MCF 10A (cell line): ENCODE measurements at regions of chr20 and their contacts with region 1.

Region 1: DNA sequence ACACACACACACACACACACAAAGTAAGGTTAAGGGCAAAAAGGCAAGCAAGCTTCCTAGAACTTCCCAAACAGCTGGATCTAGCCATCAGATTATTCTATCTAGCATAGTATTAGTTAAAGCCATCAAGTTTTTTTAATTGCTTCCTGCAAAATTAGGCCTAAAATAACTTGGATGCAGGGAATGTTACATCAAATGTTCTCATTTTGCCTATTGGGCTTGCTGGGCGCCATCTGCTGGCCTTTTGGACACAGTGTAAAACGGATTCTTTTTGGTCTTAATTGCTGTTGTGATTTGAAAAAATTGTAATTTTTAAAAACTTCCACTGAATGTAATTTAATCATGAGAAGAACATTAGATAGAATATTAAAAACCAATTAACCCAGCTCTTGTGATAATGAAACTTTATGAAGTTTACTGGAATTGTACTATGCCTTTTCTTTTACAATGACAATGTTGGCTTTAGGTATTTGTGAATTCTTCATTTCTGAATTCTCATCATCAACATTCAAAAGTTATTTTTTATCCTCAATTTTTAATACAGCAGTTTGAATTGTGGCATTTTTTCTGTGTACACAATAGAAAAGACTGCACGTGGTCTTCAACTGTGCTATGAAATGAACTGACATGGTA is 6.8 kb downstream of the MKKS start:
- DNase-seq: peak; percentile 72
- H3K4me3 Mint-ChIP-seq: no peak overlapping the region
- H3K27ac Mint-ChIP-seq: peak overlapping the region; percentile 74
- H3K4me1 Mint-ChIP-seq: peaks cover 34% of the 10 kb centered on the region
- H3K27me3 Mint-ChIP-seq: no peaks in the 10 kb centered on the region
- CTCF ChIP-seq: peak; percentile 72

Region 2: GRCh38 chr20:9966966-9967365 is 460.2 kb before region 1 on chr20:
- CTCF ChIA-PET with region 1: interaction called, 34 read pairs
- POLR2A ChIA-PET with region 1: no interaction called
- intact Hi-C with region 1: no loop called
- DNase-seq: peak; percentile 37
- H3K4me3 Mint-ChIP-seq: no peak overlapping the region
- H3K27ac Mint-ChIP-seq: no peak overlapping the region
- H3K4me1 Mint-ChIP-seq: no peaks in the 10 kb centered on the region
- H3K27me3 Mint-ChIP-seq: no peaks in the 10 kb centered on the region
- CTCF ChIP-seq: peak; percentile 41

Region 3: GRCh38 chr20:10034717-10035571 is 392.2 kb before region 1 on chr20 and contains the start of gene ANKEF1:
- CTCF ChIA-PET with region 1: interaction called, 17 read pairs
- POLR2A ChIA-PET with region 1: no interaction called
- intact Hi-C with region 1: no loop called
- DNase-seq: peak; percentile 72
- H3K4me3 Mint-ChIP-seq: peak within 1 kb of the TSS; percentile 73
- H3K27ac Mint-ChIP-seq: peak within 1 kb of the TSS; percentile 57
- H3K4me1 Mint-ChIP-seq: peaks cover 1% of the 10 kb centered on the region
- H3K27me3 Mint-ChIP-seq: no peaks in the 10 kb centered on the region
- CTCF ChIP-seq: no peak
- total RNA-seq, gene ANKEF1: 5.6 and 7.2 TPM in 2 replicates

Region 4: DNA sequence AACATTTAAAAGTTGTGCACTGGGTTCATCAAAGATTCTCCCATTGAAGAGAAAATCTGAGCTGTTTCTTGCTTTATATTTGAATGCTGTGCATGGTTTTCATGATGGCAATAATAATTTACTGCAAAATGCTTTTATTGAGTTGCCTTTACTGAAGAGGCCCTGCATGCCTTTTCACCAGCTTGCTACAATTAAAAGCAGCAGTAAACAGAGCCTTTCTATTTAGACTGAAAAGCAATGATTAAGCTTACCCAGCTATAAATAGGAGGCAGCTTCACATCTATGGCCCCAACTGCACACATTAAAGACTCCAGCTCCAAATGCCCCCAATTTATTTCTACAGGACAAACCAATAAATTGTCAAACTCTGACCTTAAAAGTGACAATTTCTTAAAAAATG is 322.1 kb before region 1 on chr20:
- CTCF ChIA-PET with region 1: interaction called, 10 read pairs
- POLR2A ChIA-PET with region 1: no interaction called
- intact Hi-C with region 1: no loop called
- DNase-seq: no peak
- H3K4me3 Mint-ChIP-seq: no peak overlapping the region
- H3K27ac Mint-ChIP-seq: no peak overlapping the region
- H3K4me1 Mint-ChIP-seq: no peaks in the 10 kb centered on the region
- H3K27me3 Mint-ChIP-seq: no peaks in the 10 kb centered on the region
- CTCF ChIP-seq: no peak

Region 5: DNA sequence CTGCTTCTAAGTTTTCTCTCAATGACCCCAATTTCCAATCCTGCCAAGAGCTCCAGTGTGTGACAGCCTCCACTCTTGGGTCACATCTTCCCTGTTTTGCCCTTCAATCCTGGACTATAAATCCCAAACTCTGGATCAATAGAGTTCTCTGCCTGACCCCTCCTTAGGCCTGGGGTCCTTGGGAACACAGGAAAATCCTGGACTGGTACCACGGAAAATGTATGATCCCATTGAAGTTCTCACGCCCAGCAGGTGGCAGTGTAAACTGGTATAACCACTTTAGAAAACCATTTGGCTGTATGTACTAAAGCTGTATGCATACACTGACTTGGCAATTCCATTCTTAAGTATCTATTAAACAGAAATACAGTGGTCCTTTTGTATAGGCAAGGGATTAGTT is 110.6 kb before region 1 on chr20:
- CTCF ChIA-PET with region 1: interaction called, 13 read pairs
- POLR2A ChIA-PET with region 1: no interaction called
- intact Hi-C with region 1: loop called (anchors 5 kb)
- DNase-seq: peak; percentile 46
- H3K4me3 Mint-ChIP-seq: no peak overlapping the region
- H3K27ac Mint-ChIP-seq: no peak overlapping the region
- H3K4me1 Mint-ChIP-seq: no peaks in the 10 kb centered on the region
- H3K27me3 Mint-ChIP-seq: no peaks in the 10 kb centered on the region
- CTCF ChIP-seq: peak; percentile 19

Region 6: DNA sequence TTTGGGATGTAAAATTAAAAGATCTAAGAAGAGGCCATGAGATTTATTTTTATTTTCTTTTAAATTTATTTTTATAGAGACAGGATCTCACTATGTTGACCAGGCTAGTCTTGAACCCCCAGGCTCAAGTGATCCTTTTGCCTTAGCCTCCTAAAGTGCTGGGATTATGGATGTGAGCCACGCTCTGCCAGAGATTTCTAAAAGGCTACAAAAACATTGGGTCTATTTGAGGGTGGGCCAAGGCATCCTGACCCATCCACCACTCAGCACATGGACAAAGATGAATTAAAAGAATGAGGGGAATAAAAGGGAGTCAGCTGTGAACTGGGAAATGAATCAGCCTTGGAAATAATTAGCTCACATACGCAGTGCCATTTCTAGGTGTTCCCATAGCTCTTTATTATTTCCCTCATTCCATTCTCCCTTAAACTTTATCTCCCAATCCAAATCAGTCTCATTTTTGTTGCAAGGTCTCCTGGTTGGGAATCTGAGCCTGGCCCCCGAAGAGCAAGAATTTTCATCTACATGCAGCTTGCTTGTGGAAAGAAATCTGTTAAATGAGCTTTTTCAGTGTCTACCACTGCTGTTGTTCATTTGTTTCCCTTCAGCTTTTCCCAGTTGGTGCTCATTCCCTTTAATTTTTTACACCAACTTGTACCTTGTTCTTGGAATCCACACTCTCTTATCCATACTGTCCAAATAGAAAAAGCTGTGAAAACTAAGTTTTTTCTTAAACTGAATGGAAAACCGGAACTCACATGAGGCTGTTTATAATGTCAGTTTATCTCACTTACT is 60.1 kb before region 1 on chr20:
- CTCF ChIA-PET with region 1: interaction called, 15 read pairs
- POLR2A ChIA-PET with region 1: no interaction called
- intact Hi-C with region 1: no loop called
- DNase-seq: no peak
- H3K4me3 Mint-ChIP-seq: no peak overlapping the region
- H3K27ac Mint-ChIP-seq: no peak overlapping the region
- H3K4me1 Mint-ChIP-seq: peaks cover 6% of the 10 kb centered on the region
- H3K27me3 Mint-ChIP-seq: no peaks in the 10 kb centered on the region
- CTCF ChIP-seq: no peak

Region 7: DNA sequence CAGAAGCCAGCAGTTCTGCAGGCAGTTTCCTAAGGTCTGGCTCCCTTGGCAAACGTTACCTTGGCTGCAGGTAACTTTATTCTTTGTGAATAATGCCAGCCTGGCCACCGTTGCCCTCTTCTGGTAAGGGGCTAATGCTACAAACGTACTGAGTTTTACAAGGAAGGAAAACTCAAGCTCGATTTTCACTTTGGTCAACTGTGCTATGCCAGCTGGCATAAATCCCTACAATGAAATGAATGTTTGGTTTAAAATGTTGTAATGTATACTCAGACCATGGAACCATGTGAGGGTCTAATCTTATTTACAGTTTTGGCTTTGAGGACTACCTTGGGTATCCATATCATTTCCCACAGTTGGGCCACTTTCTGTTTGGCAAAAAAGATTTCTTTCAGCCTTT is 109.4 kb after region 1 on chr20:
- CTCF ChIA-PET with region 1: interaction called, 10 read pairs
- POLR2A ChIA-PET with region 1: no interaction called
- intact Hi-C with region 1: no loop called
- DNase-seq: peak; percentile 71
- H3K4me3 Mint-ChIP-seq: no peak overlapping the region
- H3K27ac Mint-ChIP-seq: no peak overlapping the region
- H3K4me1 Mint-ChIP-seq: peaks cover 31% of the 10 kb centered on the region
- H3K27me3 Mint-ChIP-seq: no peaks in the 10 kb centered on the region
- CTCF ChIP-seq: peak; percentile 44